HepG2 (cell line): ENCODE measurements at regions of chr15 and their contacts with region 1.

Region 1: GRCh38 chr15:64093627-64094417 is at the start of gene CIAO2A:
- DNase-seq: peak; percentile 98
- ATAC-seq: peak; percentile 84
- H3K4me3 ChIP-seq: peak within 1 kb of the TSS; percentile 73 to 83 (median 81)
- H3K27ac ChIP-seq: peak within 1 kb of the TSS; percentile 83
- H3K4me1 ChIP-seq: peaks cover 46% of the 10 kb centered on the region
- H3K27me3 ChIP-seq: no peaks in the 10 kb centered on the region; a peak in 1 of 5 replicates
- CTCF ChIP-seq: 0 out of 2 replicates have a peak, but pooled peaks have one; percentile 4
- EP300 ChIP-seq: peak in 1 of 2 experiments; percentile 31; a peak in 1 of 4 replicates
- POLR2A ChIP-seq: peak in 1 of 2 experiments; percentile 76; a peak in 2 of 4 replicates
- RAD21 ChIP-seq: no peak
- total RNA-seq, gene CIAO2A: 100 and 114 TPM in 2 replicates

Region 2: GRCh38 chr15:63752075-63752684 is 341.6 kb before region 1 on chr15:
- CTCF ChIA-PET with region 1: no interaction called
- POLR2A ChIA-PET with region 1: interaction called, 5 read pairs
- in situ Hi-C with region 1: no loop called
- intact Hi-C with region 1: loop called (anchors 2 kb)
- DNase-seq: peak; percentile 61
- ATAC-seq: peak; percentile 69
- H3K4me3 ChIP-seq: no peak overlapping the region
- H3K27ac ChIP-seq: no peak overlapping the region
- H3K4me1 ChIP-seq: no peaks in the 10 kb centered on the region
- H3K27me3 ChIP-seq: no peaks in the 10 kb centered on the region
- CTCF ChIP-seq: peak; percentile 74
- EP300 ChIP-seq: no peak
- POLR2A ChIP-seq: no peak
- RAD21 ChIP-seq: peak; percentile 63

Region 3: GRCh38 chr15:63999177-63999576 is 94.6 kb before region 1 on chr15:
- CTCF ChIA-PET with region 1: no interaction called
- POLR2A ChIA-PET with region 1: no interaction called
- in situ Hi-C with region 1: no loop called
- intact Hi-C with region 1: no loop called
- DNase-seq: no peak
- ATAC-seq: no peak; the same call in 2 of the 3 replicates
- H3K4me3 ChIP-seq: no peak overlapping the region
- H3K27ac ChIP-seq: no peak overlapping the region
- H3K4me1 ChIP-seq: peaks cover 27% of the 10 kb centered on the region
- H3K27me3 ChIP-seq: peaks cover 3 to 6% of the 10 kb centered on the region in 2 experiments; a peak in 1 of 5 replicates
- CTCF ChIP-seq: no peak
- EP300 ChIP-seq: no peak
- POLR2A ChIP-seq: no peak
- RAD21 ChIP-seq: no peak

Region 4: DNA sequence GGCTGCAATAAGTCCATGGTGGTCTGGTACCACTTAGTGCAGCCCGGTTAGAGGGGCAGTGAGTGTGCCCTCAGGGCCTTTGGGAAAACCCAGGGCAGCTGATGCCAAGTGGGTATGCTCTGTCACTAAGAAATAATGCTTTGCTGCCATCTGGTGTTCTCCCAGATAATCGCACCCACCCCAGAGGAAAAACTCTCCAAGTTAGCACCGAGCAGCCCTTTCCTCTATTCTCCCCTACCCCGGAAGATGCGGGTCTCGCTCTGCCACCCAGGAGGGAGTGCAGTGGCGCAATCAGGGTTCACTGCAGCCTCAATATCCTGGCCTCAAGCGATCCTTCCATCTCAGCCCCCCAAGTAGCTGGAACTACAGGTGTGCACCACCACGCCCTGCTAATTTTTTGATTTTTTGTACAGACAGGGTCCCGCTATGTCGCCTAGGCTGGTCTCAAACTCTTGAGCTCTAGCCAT is 26.2 kb before region 1 on chr15:
- CTCF ChIA-PET with region 1: interaction called, 6 read pairs
- POLR2A ChIA-PET with region 1: interaction called, 88 read pairs
- in situ Hi-C with region 1: no loop called
- intact Hi-C with region 1: loop called (anchors 2 kb)
- DNase-seq: peak; percentile 60
- ATAC-seq: peak; percentile 89
- H3K4me3 ChIP-seq: no peak overlapping the region; a peak in 1 of 6 replicates
- H3K27ac ChIP-seq: no peak overlapping the region
- H3K4me1 ChIP-seq: peaks cover 44% of the 10 kb centered on the region
- H3K27me3 ChIP-seq: no peaks in the 10 kb centered on the region
- CTCF ChIP-seq: peak; percentile 88
- EP300 ChIP-seq: no peak
- POLR2A ChIP-seq: no peak
- RAD21 ChIP-seq: peak; percentile 89

Region 5: GRCh38 chr15:64072812-64073211 is 21.0 kb before region 1 on chr15:
- CTCF ChIA-PET with region 1: interaction called, 6 read pairs
- POLR2A ChIA-PET with region 1: interaction called, 88 read pairs
- in situ Hi-C with region 1: no loop called
- intact Hi-C with region 1: loop called (anchors 2 kb)
- DNase-seq: peak; percentile 91
- ATAC-seq: peak; percentile 74
- H3K4me3 ChIP-seq: peak overlapping the region in 1 of 3 experiments; percentile 0; a peak in 1 of 6 replicates
- H3K27ac ChIP-seq: peak overlapping the region; percentile 37
- H3K4me1 ChIP-seq: peaks cover 53% of the 10 kb centered on the region
- H3K27me3 ChIP-seq: no peaks in the 10 kb centered on the region
- CTCF ChIP-seq: no peak
- EP300 ChIP-seq: peak; percentile 26 to 96; a peak in 2 of 4 replicates
- POLR2A ChIP-seq: no peak
- RAD21 ChIP-seq: no peak

Region 6: DNA sequence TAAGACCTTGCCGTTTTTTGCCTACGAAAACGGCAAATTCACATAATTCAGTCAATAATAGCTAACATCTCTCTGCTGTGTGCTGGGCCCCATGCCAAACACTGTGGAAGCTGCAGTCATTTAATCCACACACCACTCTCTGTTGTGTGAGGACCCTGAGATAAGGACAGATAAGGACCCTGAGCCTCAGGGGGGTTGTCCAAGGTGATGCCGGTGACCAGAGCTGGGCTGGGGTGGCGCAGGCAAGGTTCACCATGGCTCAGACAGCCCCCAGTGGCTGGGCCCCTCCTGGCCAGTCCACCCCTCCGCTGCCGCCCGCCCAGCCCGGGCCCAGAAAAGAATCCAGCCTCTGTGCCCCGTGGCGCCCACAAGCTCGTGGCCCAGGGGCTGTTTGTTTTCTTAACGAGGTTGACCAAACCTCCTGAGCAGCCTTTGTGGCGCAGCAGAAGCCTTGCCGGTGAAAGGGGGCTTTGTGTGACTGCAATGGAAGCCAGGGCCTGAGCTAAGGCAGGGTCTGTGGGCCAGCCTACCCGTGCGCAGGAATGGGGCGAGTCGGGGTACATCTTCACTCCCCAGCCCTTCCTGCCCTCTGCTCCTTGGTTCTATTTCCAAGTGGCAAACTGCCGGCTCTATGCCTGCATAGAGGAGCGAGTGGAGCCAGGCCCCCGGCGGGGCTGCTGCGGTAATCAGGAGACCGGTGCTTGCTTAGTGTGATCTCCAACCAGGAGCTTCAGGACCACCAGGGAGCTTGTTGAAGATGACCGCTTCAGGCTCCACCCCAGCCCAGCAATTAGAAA is 53.3 kb after region 1 on chr15:
- CTCF ChIA-PET with region 1: no interaction called
- POLR2A ChIA-PET with region 1: interaction called, 14 read pairs
- in situ Hi-C with region 1: loop called (anchors 5 kb)
- intact Hi-C with region 1: loop called (anchors 2 kb)
- DNase-seq: peak; percentile 86
- ATAC-seq: peak; percentile 64
- H3K4me3 ChIP-seq: peak overlapping the region in 2 of 3 experiments; percentile 6 to 20; a peak in 3 of 6 replicates
- H3K27ac ChIP-seq: peak overlapping the region; percentile 70
- H3K4me1 ChIP-seq: peaks cover 61% of the 10 kb centered on the region
- H3K27me3 ChIP-seq: no peaks in the 10 kb centered on the region
- CTCF ChIP-seq: peak; percentile 39
- EP300 ChIP-seq: peak in 1 of 2 experiments; percentile 19; a peak in 2 of 4 replicates
- POLR2A ChIP-seq: no peak
- RAD21 ChIP-seq: no peak

Region 7: DNA sequence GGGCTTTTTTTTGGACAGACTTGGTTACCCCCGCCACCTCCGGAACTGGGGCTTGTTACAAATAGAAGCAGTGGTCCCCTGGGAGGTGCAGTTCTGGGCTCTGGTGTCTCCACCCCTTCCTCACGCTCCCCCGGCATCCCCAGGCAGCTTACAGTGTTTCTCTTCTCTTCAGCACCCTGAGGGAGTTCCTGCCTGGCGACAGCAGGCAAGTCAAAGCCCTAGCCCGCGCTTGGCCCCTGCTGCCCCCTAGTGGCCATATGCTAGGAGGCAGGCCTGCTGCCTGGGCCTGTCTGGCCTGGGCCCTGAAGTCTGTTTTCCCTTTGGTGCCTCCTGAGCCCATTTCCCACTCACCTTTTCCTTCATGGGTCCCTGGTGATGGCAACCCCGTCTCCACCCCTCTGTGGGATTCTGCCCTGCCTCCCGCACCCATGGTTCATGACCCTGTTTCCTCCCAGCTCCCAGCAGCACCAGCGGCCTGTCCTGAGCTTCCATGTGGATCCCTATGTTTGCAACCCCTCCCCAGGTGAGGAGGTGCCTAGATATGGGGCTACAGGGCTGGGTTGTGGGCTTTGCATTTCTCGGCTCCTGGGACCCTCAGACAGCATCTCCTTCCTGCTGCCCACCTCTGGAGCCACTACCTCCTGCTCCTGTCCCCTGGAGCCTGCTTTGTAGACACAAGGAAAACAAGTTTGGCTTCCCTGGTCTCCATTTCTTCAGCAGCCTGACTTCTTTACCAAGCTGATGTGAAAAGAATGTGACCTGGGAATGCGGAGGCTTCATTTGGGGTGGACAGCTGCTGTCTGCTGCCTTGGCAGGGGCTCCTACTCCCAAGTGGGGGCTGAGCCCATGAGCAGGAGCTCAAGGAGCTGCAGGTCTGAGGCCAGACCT is 59.9 kb after region 1 on chr15:
- CTCF ChIA-PET with region 1: interaction called, 4 read pairs
- POLR2A ChIA-PET with region 1: interaction called, 14 read pairs
- in situ Hi-C with region 1: loop called (anchors 5 kb)
- intact Hi-C with region 1: loop called (anchors 2 kb)
- DNase-seq: peak; percentile 77
- ATAC-seq: peak; percentile 73
- H3K4me3 ChIP-seq: no peak overlapping the region
- H3K27ac ChIP-seq: peak overlapping the region; percentile 35
- H3K4me1 ChIP-seq: peaks cover 43% of the 10 kb centered on the region
- H3K27me3 ChIP-seq: no peaks in the 10 kb centered on the region
- CTCF ChIP-seq: peak; percentile 99
- EP300 ChIP-seq: no peak
- POLR2A ChIP-seq: peak; percentile 76 to 82
- RAD21 ChIP-seq: peak; percentile 88

Region 8: DNA sequence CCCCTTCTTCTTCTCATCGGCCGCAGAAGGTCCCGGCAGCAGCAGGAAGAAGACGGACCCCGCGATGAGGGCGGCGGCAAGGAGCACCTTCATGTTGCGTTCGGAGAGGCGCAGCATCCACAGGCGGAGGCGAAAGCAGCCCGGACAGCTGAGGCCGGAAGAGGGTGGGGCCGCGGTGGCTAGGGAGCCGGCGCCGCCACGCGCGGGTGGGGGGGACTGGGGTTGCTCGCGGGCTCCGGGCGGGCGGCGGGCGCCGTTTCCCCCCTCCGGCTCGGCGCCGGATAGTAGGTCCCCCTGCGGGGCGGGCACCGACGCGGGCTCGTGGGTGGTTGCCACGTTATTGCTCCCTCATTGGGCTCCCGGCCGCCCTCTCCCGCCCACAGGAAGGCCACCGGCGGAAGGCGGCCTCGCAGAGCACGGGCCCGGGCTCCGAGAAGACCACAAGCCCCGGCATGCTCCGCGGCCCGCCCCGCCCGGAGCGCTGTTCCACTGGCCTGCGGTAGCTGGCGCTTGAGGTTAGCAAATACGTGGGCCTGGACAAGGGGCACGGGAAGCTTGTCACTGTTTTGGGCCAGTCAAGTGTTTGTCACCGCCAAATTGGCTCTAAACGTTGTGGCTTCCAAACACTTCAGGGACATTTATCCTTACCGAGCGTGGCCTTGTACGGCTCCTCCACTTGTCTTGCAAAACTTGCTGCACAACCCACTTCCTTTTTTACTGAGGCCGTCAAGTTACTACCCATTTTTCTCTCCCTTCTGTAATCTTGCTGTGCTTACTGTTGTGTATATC is 69.2 kb after region 1 on chr15 and contains the start of gene PPIB:
- CTCF ChIA-PET with region 1: no interaction called
- POLR2A ChIA-PET with region 1: interaction called, 15 read pairs
- in situ Hi-C with region 1: no loop called
- intact Hi-C with region 1: no loop called
- DNase-seq: peak; percentile 93
- ATAC-seq: peak; percentile 96
- H3K4me3 ChIP-seq: peak within 1 kb of the TSS; percentile 95 to 98 (median 97)
- H3K27ac ChIP-seq: peak within 1 kb of the TSS; percentile 90
- H3K4me1 ChIP-seq: peaks cover 53% of the 10 kb centered on the region
- H3K27me3 ChIP-seq: no peaks in the 10 kb centered on the region; a peak in 1 of 5 replicates
- CTCF ChIP-seq: peak; percentile 89
- EP300 ChIP-seq: 0 out of 4 replicates have a peak, but pooled peaks of 1 of the 2 experiments have one; percentile 19
- POLR2A ChIP-seq: peak; percentile 88
- RAD21 ChIP-seq: peak; percentile 66
- total RNA-seq, gene PPIB: 476 and 882 TPM in 2 replicates

Region 9: GRCh38 chr15:64398575-64398974 is 304.8 kb after region 1 on chr15:
- CTCF ChIA-PET with region 1: no interaction called
- POLR2A ChIA-PET with region 1: no interaction called
- in situ Hi-C with region 1: no loop called
- intact Hi-C with region 1: no loop called
- DNase-seq: no peak
- ATAC-seq: no peak
- H3K4me3 ChIP-seq: no peak overlapping the region
- H3K27ac ChIP-seq: no peak overlapping the region
- H3K4me1 ChIP-seq: no peaks in the 10 kb centered on the region
- H3K27me3 ChIP-seq: no peaks in the 10 kb centered on the region
- CTCF ChIP-seq: no peak
- EP300 ChIP-seq: no peak
- POLR2A ChIP-seq: no peak
- RAD21 ChIP-seq: no peak